Panc1 (cell line): ENCODE measurements at regions of chr3 and their contacts with region 1.

Region 1: DNA sequence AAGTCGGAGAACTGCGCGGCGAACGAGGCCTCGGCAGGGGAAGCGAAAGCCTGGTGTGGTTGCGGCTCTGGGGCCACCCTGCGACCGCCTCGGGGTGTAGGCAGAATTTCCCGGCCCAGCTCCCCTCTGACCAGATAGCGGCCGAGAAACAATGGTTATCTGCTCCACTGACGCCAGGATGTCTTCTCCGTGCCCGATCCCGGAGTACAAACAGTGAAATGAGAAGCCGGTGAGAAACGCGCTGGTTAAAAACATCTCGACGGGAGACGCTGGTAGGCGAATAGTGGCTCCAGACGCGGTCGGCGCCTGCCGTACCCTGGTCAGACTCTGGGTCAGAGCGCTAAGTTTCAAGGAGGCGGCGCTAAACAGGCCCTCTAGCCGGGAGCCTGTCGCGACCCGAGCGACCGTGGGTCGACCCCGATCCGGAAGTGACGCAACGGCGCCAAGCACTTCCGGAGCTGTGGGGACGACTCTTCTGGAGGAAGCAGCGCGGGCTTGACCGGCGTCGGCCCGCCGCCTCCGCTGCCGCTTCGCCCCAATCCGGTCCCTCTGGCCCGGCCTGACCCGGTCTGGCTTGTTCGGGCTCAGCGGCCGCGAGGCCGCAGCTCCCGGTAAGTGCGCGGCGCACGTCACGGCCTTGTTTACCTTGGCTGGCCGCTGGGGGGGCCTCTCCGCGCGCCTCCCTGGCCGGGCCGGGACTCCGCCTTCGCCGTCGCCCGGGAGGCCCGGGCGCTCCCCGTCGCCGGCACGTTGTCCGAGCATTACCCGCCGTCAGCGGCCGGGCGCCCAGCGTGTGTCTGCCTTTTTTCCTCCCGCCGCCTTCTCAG is at the start of gene ARIH2:
- DNase-seq: peak; percentile 63
- ATAC-seq: peak; percentile 97
- H3K4me3 ChIP-seq: peak within 1 kb of the TSS; percentile 71 to 82
- H3K27ac ChIP-seq: peak within 1 kb of the TSS; percentile 75
- H3K4me1 ChIP-seq: no peaks in the 10 kb centered on the region; the same call in 1 of the 2 replicates
- H3K27me3 ChIP-seq: no peaks in the 10 kb centered on the region
- CTCF ChIP-seq: no peak
- total RNA-seq, gene ARIH2: 77.0 TPM

Region 2: GRCh38 chr3:47464588-47464987 is 1454.0 kb before region 1 on chr3:
- CTCF ChIA-PET with region 1: no interaction called
- POLR2A ChIA-PET with region 1: no interaction called
- in situ Hi-C with region 1: no loop called
- intact Hi-C with region 1: no loop called
- DNase-seq: no peak
- ATAC-seq: no peak
- H3K4me3 ChIP-seq: no peak overlapping the region
- H3K27ac ChIP-seq: no peak overlapping the region
- H3K4me1 ChIP-seq: no peaks in the 10 kb centered on the region
- H3K27me3 ChIP-seq: no peaks in the 10 kb centered on the region
- CTCF ChIP-seq: no peak

Region 3: DNA sequence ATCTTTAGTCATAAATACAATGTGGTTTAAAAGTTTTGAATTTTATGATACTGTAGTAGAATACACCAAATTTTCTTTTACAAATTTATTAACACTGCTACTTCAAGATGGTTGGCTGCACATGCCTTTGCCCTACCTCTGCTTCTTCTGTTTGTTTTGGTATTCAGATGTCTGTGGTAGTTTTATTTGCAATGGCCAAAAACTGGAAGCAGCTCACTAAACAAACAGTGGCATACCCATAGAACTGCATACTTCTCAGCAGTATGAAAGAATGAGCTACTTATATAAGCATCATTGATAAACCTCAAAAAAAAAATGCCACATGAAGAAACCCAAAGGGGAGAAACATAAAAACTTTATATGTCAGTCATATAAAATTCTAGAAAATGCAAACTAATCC is 19.6 kb after region 1 on chr3:
- CTCF ChIA-PET with region 1: no interaction called
- POLR2A ChIA-PET with region 1: interaction called, 11 read pairs
- in situ Hi-C with region 1: no loop called
- intact Hi-C with region 1: no loop called
- DNase-seq: no peak
- ATAC-seq: no peak
- H3K4me3 ChIP-seq: no peak overlapping the region
- H3K27ac ChIP-seq: no peak overlapping the region
- H3K4me1 ChIP-seq: no peaks in the 10 kb centered on the region; the same call in 1 of the 2 replicates
- H3K27me3 ChIP-seq: no peaks in the 10 kb centered on the region
- CTCF ChIP-seq: no peak

Region 4: DNA sequence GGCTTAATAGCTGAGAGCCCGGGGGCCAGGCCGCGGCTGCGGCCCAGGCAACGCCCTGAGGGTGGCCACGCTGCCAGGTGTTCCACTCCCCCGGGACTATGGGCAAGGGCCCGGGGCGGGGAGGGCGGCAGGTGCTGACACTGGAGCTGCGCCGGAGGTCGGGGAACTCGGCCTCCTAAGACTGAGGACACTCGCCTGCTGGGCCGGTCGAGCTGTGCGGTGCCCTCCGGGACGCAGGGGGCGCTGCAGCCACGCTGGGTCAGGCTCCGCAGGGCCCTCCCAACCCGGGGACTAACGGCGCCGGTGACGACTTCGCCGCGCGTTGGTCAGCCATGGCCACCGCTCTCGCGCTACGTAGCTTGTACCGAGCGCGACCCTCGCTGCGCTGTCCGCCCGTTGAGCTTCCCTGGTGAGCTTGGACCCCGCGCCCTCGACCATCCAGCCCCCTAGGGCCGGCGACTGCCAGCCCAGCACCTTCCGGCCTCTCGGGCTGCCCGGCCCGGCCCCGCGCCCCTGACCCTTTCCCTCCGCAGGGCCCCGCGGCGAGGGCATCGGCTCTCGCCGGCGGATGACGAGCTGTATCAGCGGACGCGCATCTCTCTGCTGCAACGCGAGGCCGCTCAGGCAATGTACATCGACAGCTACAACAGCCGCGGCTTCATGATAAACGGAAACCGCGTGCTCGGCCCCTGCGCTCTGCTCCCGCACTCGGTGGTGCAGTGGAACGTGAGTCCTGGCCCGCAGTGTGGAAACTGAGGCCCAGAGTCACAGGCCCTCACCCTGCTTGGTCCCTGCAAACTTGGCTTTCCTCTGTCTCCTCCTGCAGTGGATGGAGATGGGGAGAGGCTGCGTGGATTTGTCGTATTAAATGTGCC is 103.4 kb after region 1 on chr3 and contains the start of gene NDUFAF3:
- CTCF ChIA-PET with region 1: no interaction called
- POLR2A ChIA-PET with region 1: no interaction called
- in situ Hi-C with region 1: no loop called
- intact Hi-C with region 1: no loop called
- DNase-seq: no peak
- ATAC-seq: peak; percentile 66
- H3K4me3 ChIP-seq: peak within 1 kb of the TSS; percentile 71 to 90
- H3K27ac ChIP-seq: peak within 1 kb of the TSS; percentile 97
- H3K4me1 ChIP-seq: peaks cover 26% of the 10 kb centered on the region
- H3K27me3 ChIP-seq: no peaks in the 10 kb centered on the region
- CTCF ChIP-seq: peak; percentile 92
- total RNA-seq, gene NDUFAF3: 101 TPM